AG04450 (cell line): ENCODE measurements at regions of chr15 and their contacts with region 1.

Region 1: GRCh38 chr15:40108855-40109735 is at the start of gene BMF:
- DNase-seq: peak; percentile 98
- H3K4me3 ChIP-seq: peak within 1 kb of the TSS; percentile 84
- H3K27ac ChIP-seq: peak within 1 kb of the TSS; percentile 39
- H3K27me3 ChIP-seq: peaks cover 27% of the 10 kb centered on the region
- CTCF ChIP-seq: peak; percentile 43; the same call in 1 of the 2 replicates
- polyA plus RNA-seq, gene BMF: 6.2 and 6.5 TPM in 2 replicates

Region 2: DNA sequence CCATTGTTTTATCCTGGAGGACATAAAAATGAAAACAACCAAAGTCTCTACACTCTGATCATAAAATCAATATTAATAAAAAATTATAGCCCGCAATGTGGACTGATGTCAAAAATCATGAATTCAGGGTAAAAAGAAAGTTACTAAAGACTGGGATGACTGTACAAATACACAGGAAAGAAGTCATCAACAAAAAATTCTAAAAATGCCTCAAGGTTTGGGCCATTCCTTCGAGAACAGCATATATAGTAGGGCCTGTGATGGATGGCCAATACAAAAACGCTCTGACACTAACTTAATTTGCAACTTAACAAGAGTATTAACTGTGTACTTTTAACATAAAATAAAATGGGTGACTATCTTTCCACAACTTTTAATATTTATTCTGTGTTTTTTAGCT is 451.4 kb before region 1 on chr15:
- CTCF ChIA-PET with region 1: no interaction called
- POLR2A ChIA-PET with region 1: no interaction called
- DNase-seq: peak; percentile 20
- H3K4me3 ChIP-seq: no peak overlapping the region
- H3K27ac ChIP-seq: no peak overlapping the region
- H3K27me3 ChIP-seq: no peaks in the 10 kb centered on the region
- CTCF ChIP-seq: no peak

Region 3: DNA sequence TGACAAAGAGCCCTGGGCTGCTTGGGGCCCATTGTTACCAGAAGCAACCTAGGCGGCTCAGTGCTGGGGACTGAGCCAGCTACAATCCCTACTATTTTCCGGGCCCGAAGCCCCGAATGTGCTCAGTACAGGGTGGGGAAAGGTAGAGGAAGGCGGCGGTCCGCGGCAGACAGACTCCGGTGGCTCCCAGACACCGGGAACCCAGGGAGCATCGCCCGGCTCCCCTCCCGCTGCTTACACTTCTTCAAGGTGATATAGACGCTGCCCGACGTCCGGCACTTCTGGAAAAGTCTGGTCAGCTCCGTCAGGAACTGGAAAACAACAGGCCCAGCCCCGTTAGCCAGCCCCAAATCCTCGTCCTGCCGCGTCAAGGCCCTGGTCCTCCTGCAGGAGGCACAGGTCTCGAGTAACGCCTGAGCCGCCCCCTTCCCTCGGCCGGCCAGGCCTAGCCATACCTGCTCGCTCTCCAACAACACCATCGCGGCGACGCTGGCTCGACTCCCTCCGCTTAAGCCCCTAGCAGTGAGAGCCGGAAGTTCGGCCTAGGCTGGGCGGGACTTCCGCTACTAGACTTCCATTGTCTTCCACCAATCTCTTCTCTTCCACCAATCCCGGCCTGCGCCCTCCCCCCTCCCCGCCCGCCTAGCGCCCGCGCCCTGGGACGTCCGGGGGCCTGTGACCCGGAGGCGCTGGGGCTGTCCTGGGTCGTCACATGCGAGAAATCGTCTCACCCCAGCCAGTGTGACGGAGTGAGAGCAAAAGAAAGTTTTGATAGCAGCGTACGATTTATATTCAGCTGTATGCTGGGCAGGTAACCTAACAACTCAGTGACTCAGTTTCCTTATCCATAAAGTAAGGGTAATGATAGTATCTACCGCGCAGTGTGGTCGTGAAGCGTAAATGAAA is 70.2 kb before region 1 on chr15 and contains the start of gene SRP14:
- CTCF ChIA-PET with region 1: interaction called, 13 read pairs
- POLR2A ChIA-PET with region 1: no interaction called
- DNase-seq: peak; percentile 68
- H3K4me3 ChIP-seq: peak within 1 kb of the TSS; percentile 97
- H3K27ac ChIP-seq: peak within 1 kb of the TSS; percentile 86
- H3K27me3 ChIP-seq: no peaks in the 10 kb centered on the region
- CTCF ChIP-seq: no peak
- polyA plus RNA-seq, gene SRP14: 426 and 559 TPM in 2 replicates

Region 4: GRCh38 chr15:40054605-40055545 is 54.2 kb before region 1 on chr15:
- CTCF ChIA-PET with region 1: interaction called, 68 read pairs
- POLR2A ChIA-PET with region 1: interaction called, 5 read pairs
- DNase-seq: no peak
- H3K4me3 ChIP-seq: no peak overlapping the region
- H3K27ac ChIP-seq: no peak overlapping the region
- H3K27me3 ChIP-seq: no peaks in the 10 kb centered on the region
- CTCF ChIP-seq: no peak

Region 5: GRCh38 chr15:40066531-40066930 is 42.6 kb before region 1 on chr15:
- CTCF ChIA-PET with region 1: interaction called, 11 read pairs
- POLR2A ChIA-PET with region 1: no interaction called
- DNase-seq: no peak
- H3K4me3 ChIP-seq: no peak overlapping the region
- H3K27ac ChIP-seq: no peak overlapping the region
- H3K27me3 ChIP-seq: no peaks in the 10 kb centered on the region
- CTCF ChIP-seq: no peak

Region 6: DNA sequence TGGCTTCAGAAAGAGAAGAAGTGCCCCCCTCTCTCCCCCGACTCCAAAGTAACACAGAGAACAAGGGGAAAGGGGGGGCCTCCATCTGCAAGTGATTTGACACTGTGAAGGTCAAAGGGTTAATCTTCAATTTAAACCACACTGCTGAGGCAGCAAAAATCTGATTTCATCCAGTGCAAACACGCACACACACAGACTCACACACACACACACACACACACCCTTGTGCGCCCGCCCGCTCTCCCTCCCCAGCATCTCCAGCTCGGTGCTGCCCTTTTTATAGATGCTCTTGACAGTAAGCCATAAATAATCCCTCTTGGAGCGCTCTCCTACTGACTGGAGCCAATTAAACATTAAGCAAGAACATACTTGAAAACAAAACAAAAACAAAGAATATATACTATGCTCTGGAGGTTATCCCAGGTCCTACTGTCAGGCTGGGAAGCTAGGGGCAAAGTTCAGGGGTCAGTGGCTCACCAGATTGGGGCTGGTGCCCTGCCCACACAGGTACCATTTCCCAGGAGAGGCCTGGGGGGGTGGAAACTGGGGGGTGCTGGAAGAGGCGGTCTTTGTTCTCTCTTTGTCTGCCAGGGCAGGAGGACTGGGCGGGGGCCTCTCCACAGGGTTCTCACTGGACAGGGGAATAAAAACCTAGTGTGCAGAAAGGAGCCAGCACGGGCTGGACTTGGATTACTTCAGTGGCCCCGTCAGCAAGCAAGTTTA is 16.7 kb before region 1 on chr15:
- CTCF ChIA-PET with region 1: interaction called, 20 read pairs
- POLR2A ChIA-PET with region 1: interaction called, 5 read pairs
- DNase-seq: peak; percentile 76
- H3K4me3 ChIP-seq: no peak overlapping the region
- H3K27ac ChIP-seq: peak overlapping the region; percentile 94
- H3K27me3 ChIP-seq: no peaks in the 10 kb centered on the region
- CTCF ChIP-seq: no peak